ENCODE measurements at regions of chr2 and their contacts with region 1.

Region 1: GRCh38 chr2:162221064-162221463 is 22.2 kb downstream of the FAP start:
- DNase-seq: peak; percentile 74
- ATAC-seq: peak; percentile 85
- H3K4me3 Mint-ChIP-seq: no peak overlapping the region
- H3K27ac Mint-ChIP-seq: no peak overlapping the region
- H3K4me1 Mint-ChIP-seq: no peaks in the 10 kb centered on the region
- H3K27me3 Mint-ChIP-seq: peaks cover 9% of the 10 kb centered on the region
- CTCF ChIP-seq: peak; percentile 90

Region 2: GRCh38 chr2:162174746-162175145 is 46.3 kb before region 1 on chr2:
- CTCF ChIA-PET with region 1: interaction called, 12 read pairs
- POLR2A ChIA-PET with region 1: no interaction called
- intact Hi-C with region 1: no loop called
- DNase-seq: no peak
- ATAC-seq: no peak
- H3K4me3 Mint-ChIP-seq: no peak overlapping the region
- H3K27ac Mint-ChIP-seq: no peak overlapping the region
- H3K4me1 Mint-ChIP-seq: no peaks in the 10 kb centered on the region
- H3K27me3 Mint-ChIP-seq: peaks cover 18% of the 10 kb centered on the region
- CTCF ChIP-seq: no peak

Region 3: DNA sequence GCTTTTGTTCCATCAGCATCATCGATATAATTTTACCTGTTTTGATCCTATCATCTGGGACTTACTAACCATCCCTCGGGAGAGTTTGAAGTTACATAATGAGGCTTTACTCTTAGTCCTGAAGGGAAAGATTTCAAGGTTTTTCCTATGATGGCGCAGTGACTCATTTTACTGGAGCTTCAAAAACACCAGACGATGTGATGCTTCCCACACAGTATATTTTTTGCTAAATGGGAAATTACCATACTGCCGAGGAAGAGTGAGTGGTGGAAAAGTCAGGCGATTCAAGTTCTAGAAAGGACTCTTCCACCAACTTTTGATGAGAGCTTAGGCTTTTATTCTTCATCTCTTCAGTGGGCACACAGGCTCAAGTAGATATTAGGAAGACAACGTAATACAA is 24.4 kb before region 1 on chr2:
- CTCF ChIA-PET with region 1: interaction called, 14 read pairs
- POLR2A ChIA-PET with region 1: no interaction called
- intact Hi-C with region 1: no loop called
- DNase-seq: no peak
- ATAC-seq: no peak
- H3K4me3 Mint-ChIP-seq: no peak overlapping the region
- H3K27ac Mint-ChIP-seq: no peak overlapping the region
- H3K4me1 Mint-ChIP-seq: peaks cover 6% of the 10 kb centered on the region
- H3K27me3 Mint-ChIP-seq: peaks cover 31% of the 10 kb centered on the region
- CTCF ChIP-seq: no peak

Region 4: GRCh38 chr2:162243294-162243693 is 22.2 kb after region 1 on chr2 and contains the start of gene FAP:
- CTCF ChIA-PET with region 1: interaction called, 29 read pairs
- POLR2A ChIA-PET with region 1: no interaction called
- intact Hi-C with region 1: no loop called
- DNase-seq: no peak
- ATAC-seq: no peak
- H3K4me3 Mint-ChIP-seq: no peak within 1 kb of the TSS
- H3K27ac Mint-ChIP-seq: no peak within 1 kb of the TSS
- H3K4me1 Mint-ChIP-seq: no peaks in the 10 kb centered on the region
- H3K27me3 Mint-ChIP-seq: peaks cover 17% of the 10 kb centered on the region
- CTCF ChIP-seq: no peak
- total RNA-seq, gene FAP: not detected

Region 5: GRCh38 chr2:162301151-162301804 is 80.2 kb after region 1 on chr2:
- CTCF ChIA-PET with region 1: interaction called, 292 read pairs
- POLR2A ChIA-PET with region 1: no interaction called
- intact Hi-C with region 1: loop called (anchors 2 kb)
- DNase-seq: peak; percentile 69
- ATAC-seq: peak; percentile 69
- H3K4me3 Mint-ChIP-seq: no peak overlapping the region
- H3K27ac Mint-ChIP-seq: no peak overlapping the region
- H3K4me1 Mint-ChIP-seq: no peaks in the 10 kb centered on the region
- H3K27me3 Mint-ChIP-seq: no peaks in the 10 kb centered on the region
- CTCF ChIP-seq: peak; percentile 93

Region 6: GRCh38 chr2:162333968-162334367 is 112.9 kb after region 1 on chr2:
- CTCF ChIA-PET with region 1: interaction called, 13 read pairs
- POLR2A ChIA-PET with region 1: no interaction called
- intact Hi-C with region 1: no loop called
- DNase-seq: peak; percentile 52
- ATAC-seq: peak; percentile 42
- H3K4me3 Mint-ChIP-seq: no peak overlapping the region
- H3K27ac Mint-ChIP-seq: no peak overlapping the region
- H3K4me1 Mint-ChIP-seq: no peaks in the 10 kb centered on the region
- H3K27me3 Mint-ChIP-seq: no peaks in the 10 kb centered on the region
- CTCF ChIP-seq: peak; percentile 59

Region 7: GRCh38 chr2:162416446-162416845 is 195.4 kb after region 1 on chr2:
- CTCF ChIA-PET with region 1: no interaction called
- POLR2A ChIA-PET with region 1: no interaction called
- intact Hi-C with region 1: no loop called
- DNase-seq: no peak
- ATAC-seq: no peak
- H3K4me3 Mint-ChIP-seq: no peak overlapping the region
- H3K27ac Mint-ChIP-seq: no peak overlapping the region
- H3K4me1 Mint-ChIP-seq: no peaks in the 10 kb centered on the region
- H3K27me3 Mint-ChIP-seq: peaks cover 5% of the 10 kb centered on the region
- CTCF ChIP-seq: no peak

Measured in activated CD8-positive, alpha-beta T cell treated with anti-CD3 and anti-CD28 coated beads for 36 hours (primary cell).